B cell (primary cell): ENCODE measurements at regions of chr2 and their contacts with region 1.

Region 1: DNA sequence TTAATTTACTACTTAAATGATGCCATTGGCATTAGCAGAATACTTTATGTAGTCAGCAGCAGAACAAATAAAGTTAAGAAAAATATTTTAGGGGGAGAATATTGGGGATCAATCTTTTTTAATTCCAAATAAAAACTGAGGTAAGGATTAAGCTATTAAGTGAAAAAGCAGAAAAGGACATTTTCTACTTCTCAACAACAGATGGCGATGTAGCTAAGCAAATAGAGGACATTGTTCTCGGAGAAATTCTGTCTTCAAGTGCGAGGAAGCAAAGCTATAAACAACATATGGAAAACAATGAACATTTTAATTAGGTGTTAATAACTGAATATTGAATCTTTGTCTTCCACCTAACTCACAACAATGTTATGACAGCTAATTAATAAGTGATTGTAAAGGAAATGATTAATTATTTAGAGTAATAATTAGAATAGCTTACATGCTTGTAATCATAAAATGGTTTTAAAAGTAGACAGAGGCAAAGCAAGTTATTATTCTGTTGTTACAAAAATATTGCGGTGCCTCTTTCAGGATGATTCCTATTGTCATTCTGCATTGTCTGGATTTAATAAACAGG is 32.9 kb upstream of the CCDC93 start:
- DNase-seq: peak; percentile 66
- ATAC-seq: no peak
- H3K4me3 ChIP-seq: no peak overlapping the region
- H3K4me3 Mint-ChIP-seq: no peak overlapping the region
- H3K27ac ChIP-seq: no peak overlapping the region
- H3K27ac Mint-ChIP-seq: no peak overlapping the region
- H3K4me1 ChIP-seq: peaks cover 0 to 5% of the 10 kb centered on the region in 2 donors
- H3K4me1 Mint-ChIP-seq: peaks cover 10% of the 10 kb centered on the region
- H3K27me3 ChIP-seq: peaks cover 0 to 9% (median 4%) of the 10 kb centered on the region in 4 experiments
- H3K27me3 Mint-ChIP-seq: peaks cover 28% of the 10 kb centered on the region
- CTCF ChIP-seq: peak; percentile 83

Region 2: GRCh38 chr2:117888897-117889296 is 157.8 kb before region 1 on chr2:
- CTCF ChIA-PET with region 1: no interaction called
- POLR2A ChIA-PET with region 1: no interaction called
- intact Hi-C with region 1: no loop called
- DNase-seq: no peak
- ATAC-seq: no peak
- H3K4me3 ChIP-seq: no peak overlapping the region
- H3K4me3 Mint-ChIP-seq: no peak overlapping the region
- H3K27ac ChIP-seq: no peak overlapping the region
- H3K27ac Mint-ChIP-seq: no peak overlapping the region
- H3K4me1 ChIP-seq: no peaks in the 10 kb centered on the region
- H3K4me1 Mint-ChIP-seq: no peaks in the 10 kb centered on the region
- H3K27me3 ChIP-seq: no peaks in the 10 kb centered on the region
- H3K27me3 Mint-ChIP-seq: peaks cover 3% of the 10 kb centered on the region
- CTCF ChIP-seq: no peak

Region 3: GRCh38 chr2:118003396-118003824 is 43.3 kb before region 1 on chr2:
- CTCF ChIA-PET with region 1: interaction called, 16 read pairs
- POLR2A ChIA-PET with region 1: no interaction called
- intact Hi-C with region 1: no loop called
- DNase-seq: peak; percentile 86
- ATAC-seq: peak; percentile 94
- H3K4me3 ChIP-seq: no peak overlapping the region
- H3K4me3 Mint-ChIP-seq: no peak overlapping the region
- H3K27ac ChIP-seq: peak overlapping the region in 1 of 2 donors; percentile 15
- H3K27ac Mint-ChIP-seq: peak overlapping the region; percentile 73
- H3K4me1 ChIP-seq: peaks cover 7 to 8% of the 10 kb centered on the region in 2 donors
- H3K4me1 Mint-ChIP-seq: peaks cover 7% of the 10 kb centered on the region
- H3K27me3 ChIP-seq: no peaks in the 10 kb centered on the region
- H3K27me3 Mint-ChIP-seq: no peaks in the 10 kb centered on the region
- CTCF ChIP-seq: peak; percentile 91

Region 4: DNA sequence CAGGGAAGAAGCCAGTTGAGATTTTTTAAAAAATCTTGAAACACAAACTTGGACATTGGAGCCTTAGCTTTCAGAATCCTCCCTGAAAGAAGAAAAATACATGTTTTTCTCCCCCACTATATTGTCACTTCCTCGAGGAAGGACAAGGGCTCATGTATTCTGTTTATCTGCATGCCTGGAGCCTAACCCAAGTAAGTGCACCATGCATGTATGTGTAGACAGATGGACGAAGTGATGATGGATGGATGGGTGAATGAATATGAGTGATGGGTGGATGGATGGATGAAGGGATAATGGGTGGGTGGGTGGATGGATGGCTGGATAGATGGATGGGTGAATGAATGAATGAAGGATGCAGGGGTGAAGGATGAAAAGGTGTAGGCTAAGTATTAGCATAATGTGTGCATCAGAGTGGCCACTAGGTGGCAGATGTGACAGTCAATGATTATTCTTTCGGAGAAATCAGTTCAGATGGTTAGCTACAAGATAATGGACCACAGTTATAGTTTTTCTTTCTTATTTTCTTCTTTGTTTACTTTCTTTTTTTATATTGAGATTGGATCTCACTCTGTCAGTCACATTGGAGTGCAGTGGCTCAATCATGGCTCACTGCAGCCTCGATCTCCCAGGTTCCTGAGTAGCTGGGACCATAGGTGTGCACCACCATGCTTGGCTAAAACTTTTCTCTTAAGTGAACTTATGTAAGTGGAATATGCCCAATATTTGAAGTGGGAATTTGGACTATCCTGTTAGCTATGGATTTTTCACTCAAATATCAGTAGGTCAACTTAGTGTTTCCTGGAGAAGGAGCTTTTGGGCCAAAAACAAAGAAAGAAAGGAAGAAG is 14.3 kb before region 1 on chr2:
- CTCF ChIA-PET with region 1: interaction called, 784 read pairs
- POLR2A ChIA-PET with region 1: no interaction called
- intact Hi-C with region 1: loop called (anchors 1 kb)
- DNase-seq: peak; percentile 65
- ATAC-seq: peak; percentile 81
- H3K4me3 ChIP-seq: no peak overlapping the region
- H3K4me3 Mint-ChIP-seq: no peak overlapping the region
- H3K27ac ChIP-seq: no peak overlapping the region
- H3K27ac Mint-ChIP-seq: no peak overlapping the region
- H3K4me1 ChIP-seq: peaks cover 8 to 9% of the 10 kb centered on the region in 2 donors
- H3K4me1 Mint-ChIP-seq: peaks cover 9% of the 10 kb centered on the region
- H3K27me3 ChIP-seq: peaks cover 0 to 16% (median 9%) of the 10 kb centered on the region in 4 experiments
- H3K27me3 Mint-ChIP-seq: peaks cover 44% of the 10 kb centered on the region
- CTCF ChIP-seq: peak; percentile 85

Region 5: GRCh38 chr2:118077636-118078247 is 31.0 kb after region 1 on chr2:
- CTCF ChIA-PET with region 1: interaction called, 784 read pairs
- POLR2A ChIA-PET with region 1: no interaction called
- intact Hi-C with region 1: no loop called
- DNase-seq: no peak
- ATAC-seq: no peak
- H3K4me3 ChIP-seq: no peak overlapping the region
- H3K4me3 Mint-ChIP-seq: no peak overlapping the region
- H3K27ac ChIP-seq: no peak overlapping the region
- H3K27ac Mint-ChIP-seq: no peak overlapping the region
- H3K4me1 ChIP-seq: no peaks in the 10 kb centered on the region
- H3K4me1 Mint-ChIP-seq: no peaks in the 10 kb centered on the region
- H3K27me3 ChIP-seq: peaks cover 0 to 10% (median 0%) of the 10 kb centered on the region in 4 experiments
- H3K27me3 Mint-ChIP-seq: peaks cover 72% of the 10 kb centered on the region
- CTCF ChIP-seq: no peak

Region 6: GRCh38 chr2:118202707-118203303 is 156.1 kb after region 1 on chr2:
- CTCF ChIA-PET with region 1: interaction called, 10 read pairs
- POLR2A ChIA-PET with region 1: no interaction called
- intact Hi-C with region 1: loop called (anchors 5 kb)
- DNase-seq: peak; percentile 66
- ATAC-seq: peak; percentile 87
- H3K4me3 ChIP-seq: no peak overlapping the region
- H3K4me3 Mint-ChIP-seq: no peak overlapping the region
- H3K27ac ChIP-seq: no peak overlapping the region
- H3K27ac Mint-ChIP-seq: no peak overlapping the region
- H3K4me1 ChIP-seq: peaks cover 0 to 5% of the 10 kb centered on the region in 2 donors
- H3K4me1 Mint-ChIP-seq: peaks cover 4% of the 10 kb centered on the region
- H3K27me3 ChIP-seq: peaks cover 0 to 15% (median 6%) of the 10 kb centered on the region in 4 experiments
- H3K27me3 Mint-ChIP-seq: peaks cover 47% of the 10 kb centered on the region
- CTCF ChIP-seq: peak; percentile 91

Region 7: DNA sequence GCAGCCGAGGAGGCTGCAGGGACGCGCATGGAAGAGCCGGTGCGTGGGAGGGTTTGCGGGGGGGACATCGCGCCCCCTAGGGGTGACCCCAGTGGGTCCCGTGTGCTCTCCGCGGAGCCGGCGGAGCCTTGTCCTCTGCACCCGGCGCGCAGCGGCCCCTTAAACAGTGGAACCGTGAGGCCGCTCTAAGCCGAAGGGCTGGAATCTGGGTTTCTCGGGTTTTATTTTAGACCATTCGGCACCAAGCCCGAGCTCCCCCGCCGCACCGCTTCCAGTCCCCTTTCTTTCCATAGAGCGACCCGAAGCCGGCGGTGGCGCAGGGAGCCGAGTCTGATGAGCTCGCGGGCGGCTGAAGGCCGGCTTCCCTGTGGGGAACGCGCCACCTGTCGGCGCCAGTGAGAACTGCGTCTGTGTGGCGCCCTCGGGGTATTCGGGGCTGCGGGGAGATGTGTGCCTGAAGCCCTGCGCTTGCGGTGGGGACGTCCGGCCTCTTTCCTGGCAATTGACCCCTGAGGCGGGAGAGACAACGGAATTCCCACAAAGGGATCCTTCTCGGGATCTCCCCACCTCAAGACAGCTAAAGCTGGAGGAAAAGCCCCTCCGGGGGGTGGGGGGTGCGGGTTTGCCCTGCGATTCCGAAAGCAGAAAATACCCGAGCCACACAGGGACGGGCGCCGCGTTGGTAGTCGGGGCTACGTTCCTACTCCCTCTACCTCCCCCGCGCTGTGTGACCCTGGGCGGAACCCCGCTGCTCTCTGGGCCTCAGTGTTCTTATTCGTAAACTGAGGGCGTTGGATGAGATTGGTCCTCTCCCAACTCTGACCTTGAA is 808.9 kb after region 1 on chr2:
- CTCF ChIA-PET with region 1: interaction called, 17 read pairs
- POLR2A ChIA-PET with region 1: no interaction called
- intact Hi-C with region 1: loop called (anchors 1 kb)
- DNase-seq: peak; percentile 85
- ATAC-seq: peak; percentile 87
- H3K4me3 ChIP-seq: peak overlapping the region in 4 of 5 experiments; percentile 18 to 59 (median 38)
- H3K4me3 Mint-ChIP-seq: peak overlapping the region; percentile 75
- H3K27ac ChIP-seq: no peak overlapping the region
- H3K27ac Mint-ChIP-seq: no peak overlapping the region
- H3K4me1 ChIP-seq: peaks cover 30 to 57% of the 10 kb centered on the region in 2 donors
- H3K4me1 Mint-ChIP-seq: peaks cover 23% of the 10 kb centered on the region
- H3K27me3 ChIP-seq: peaks cover 0 to 98% (median 81%) of the 10 kb centered on the region in 4 experiments
- H3K27me3 Mint-ChIP-seq: peaks cover 73% of the 10 kb centered on the region
- CTCF ChIP-seq: peak; percentile 88